HEK293 (cell line): ENCODE measurements at regions of chr16 and their contacts with region 1.

Region 1: DNA sequence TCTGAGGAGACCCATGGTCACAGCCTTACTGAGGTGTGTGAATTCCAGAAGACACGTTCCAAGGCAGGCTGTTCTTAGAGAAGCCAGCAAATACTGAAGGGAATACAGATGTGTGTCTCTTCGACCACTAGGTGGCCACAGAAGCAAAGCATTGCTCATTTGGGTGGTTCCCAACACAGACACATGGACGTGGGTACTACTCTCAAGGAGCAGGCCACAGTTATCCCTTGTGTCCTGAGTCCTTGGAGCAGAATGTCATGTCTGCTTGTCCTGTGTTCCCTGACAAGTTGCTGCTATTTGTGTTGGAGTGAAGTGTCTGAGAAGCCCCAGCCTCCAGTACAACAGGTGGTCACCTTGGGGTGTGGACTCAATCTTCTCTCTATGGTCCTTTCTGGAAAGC is 30.3 kb downstream of the HMOX2 start:
- H3K4me3 ChIP-seq: no peak overlapping the region
- H3K27ac ChIP-seq: no peak overlapping the region
- H3K4me1 ChIP-seq: no peaks in the 10 kb centered on the region
- CTCF ChIP-seq: peak; percentile 83

Region 2: DNA sequence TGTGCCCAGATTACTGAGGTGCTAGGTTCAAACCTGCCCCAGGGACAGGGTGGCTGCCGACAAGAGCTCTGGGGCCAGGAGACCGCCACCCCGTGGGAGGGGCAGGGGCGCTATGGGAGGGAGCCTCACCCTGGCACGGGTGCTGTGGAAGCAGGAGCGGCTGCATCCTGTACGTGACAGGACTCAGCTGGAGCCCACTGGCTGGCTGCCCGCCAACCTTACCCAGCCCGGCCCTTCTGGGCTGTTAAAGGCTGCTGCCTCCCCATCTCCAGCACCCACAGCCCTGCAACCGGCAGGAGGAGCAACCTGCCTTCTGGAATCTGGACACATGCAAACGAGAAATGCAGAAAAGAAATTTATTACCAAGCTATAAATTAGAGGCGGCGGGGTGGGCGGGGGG is 166.5 kb before region 1 on chr16:
- CTCF ChIA-PET with region 1: no interaction called
- POLR2A ChIA-PET with region 1: no interaction called
- H3K4me3 ChIP-seq: no peak overlapping the region
- H3K27ac ChIP-seq: 0 out of 2 replicates have a peak overlapping the region, but pooled peaks have one; percentile 2
- H3K4me1 ChIP-seq: peaks cover 2% of the 10 kb centered on the region; the same call in 1 of the 2 replicates
- CTCF ChIP-seq: peak; percentile 35; the same call in 1 of the 2 replicates

Region 3: GRCh38 chr16:4487955-4488498 is 18.4 kb before region 1 on chr16:
- CTCF ChIA-PET with region 1: interaction called, 10 read pairs
- POLR2A ChIA-PET with region 1: interaction called, 3 read pairs
- H3K4me3 ChIP-seq: no peak overlapping the region
- H3K27ac ChIP-seq: no peak overlapping the region
- H3K4me1 ChIP-seq: 0 out of 2 replicates have a peak, but pooled peaks cover 2% of the 10 kb centered on the region
- CTCF ChIP-seq: no peak

Region 4: DNA sequence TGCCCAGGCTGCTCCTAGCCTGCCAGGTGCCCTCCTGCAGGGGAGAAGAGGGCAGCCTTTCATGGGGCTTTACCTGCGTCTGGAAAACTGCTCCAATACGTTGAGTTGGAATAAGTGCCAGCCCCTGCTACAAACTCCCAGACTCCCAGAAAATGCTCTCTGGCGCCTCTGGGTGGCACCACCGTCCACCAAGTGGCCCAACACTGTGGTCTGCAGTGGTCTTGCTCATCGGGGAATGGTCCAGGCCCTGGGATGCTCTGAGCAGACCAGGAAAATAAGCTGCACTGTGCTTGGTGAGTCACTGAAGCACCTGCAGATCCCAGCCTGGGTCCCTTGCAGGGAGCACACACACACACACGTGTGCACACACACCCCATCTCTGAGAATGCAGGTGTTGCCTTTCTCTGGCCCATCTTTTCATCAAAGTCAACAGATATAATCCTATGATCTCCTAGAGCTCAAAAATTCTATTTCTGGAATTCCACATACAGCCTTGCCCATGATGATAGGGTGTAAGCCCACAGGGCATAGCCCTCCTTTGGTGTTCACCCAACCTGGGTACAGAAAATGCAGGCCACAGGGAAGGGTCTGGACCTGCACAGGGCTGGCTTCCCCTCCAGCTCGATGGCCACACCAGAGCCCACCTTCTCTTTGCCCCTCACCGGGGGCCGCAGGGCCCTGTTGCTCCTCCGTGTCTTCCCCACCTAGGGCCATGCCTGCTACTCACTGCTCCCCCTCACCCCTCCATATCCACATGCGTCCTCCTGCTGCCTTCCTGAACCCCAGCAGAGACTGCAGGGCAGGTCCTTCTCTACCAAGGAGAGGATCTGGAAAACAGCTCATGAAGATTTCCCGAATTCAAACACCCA is 11.6 kb after region 1 on chr16:
- CTCF ChIA-PET with region 1: interaction called, 22 read pairs
- POLR2A ChIA-PET with region 1: no interaction called
- H3K4me3 ChIP-seq: no peak overlapping the region
- H3K27ac ChIP-seq: no peak overlapping the region
- H3K4me1 ChIP-seq: no peaks in the 10 kb centered on the region
- CTCF ChIP-seq: peak; percentile 74

Region 5: GRCh38 chr16:4550591-4550990 is 44.1 kb after region 1 on chr16:
- CTCF ChIA-PET with region 1: interaction called, 13 read pairs
- POLR2A ChIA-PET with region 1: no interaction called
- H3K4me3 ChIP-seq: no peak overlapping the region
- H3K27ac ChIP-seq: no peak overlapping the region
- H3K4me1 ChIP-seq: no peaks in the 10 kb centered on the region
- CTCF ChIP-seq: no peak

Region 6: DNA sequence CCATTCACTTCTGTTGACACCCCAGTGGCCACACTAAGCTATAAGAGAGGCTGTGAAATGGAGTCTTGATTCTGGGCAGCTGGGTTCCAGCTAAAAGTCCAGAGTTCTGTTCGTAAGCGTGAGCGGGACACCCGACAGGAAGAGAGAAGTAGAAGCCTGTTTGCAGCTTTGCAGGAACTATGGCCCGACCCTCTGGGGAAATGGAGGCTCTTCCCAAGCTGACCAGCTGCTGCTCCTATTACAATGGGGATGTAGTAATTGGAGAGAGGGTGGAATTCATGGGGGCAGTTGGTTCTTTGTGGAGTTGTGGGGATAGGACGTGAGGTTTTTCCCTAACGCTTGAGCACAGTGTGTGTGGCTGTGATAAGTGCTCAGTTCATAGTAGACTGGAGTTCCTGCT is 79.8 kb after region 1 on chr16:
- CTCF ChIA-PET with region 1: interaction called, 26 read pairs
- POLR2A ChIA-PET with region 1: no interaction called
- H3K4me3 ChIP-seq: no peak overlapping the region
- H3K27ac ChIP-seq: no peak overlapping the region
- H3K4me1 ChIP-seq: no peaks in the 10 kb centered on the region
- CTCF ChIP-seq: no peak

Region 7: DNA sequence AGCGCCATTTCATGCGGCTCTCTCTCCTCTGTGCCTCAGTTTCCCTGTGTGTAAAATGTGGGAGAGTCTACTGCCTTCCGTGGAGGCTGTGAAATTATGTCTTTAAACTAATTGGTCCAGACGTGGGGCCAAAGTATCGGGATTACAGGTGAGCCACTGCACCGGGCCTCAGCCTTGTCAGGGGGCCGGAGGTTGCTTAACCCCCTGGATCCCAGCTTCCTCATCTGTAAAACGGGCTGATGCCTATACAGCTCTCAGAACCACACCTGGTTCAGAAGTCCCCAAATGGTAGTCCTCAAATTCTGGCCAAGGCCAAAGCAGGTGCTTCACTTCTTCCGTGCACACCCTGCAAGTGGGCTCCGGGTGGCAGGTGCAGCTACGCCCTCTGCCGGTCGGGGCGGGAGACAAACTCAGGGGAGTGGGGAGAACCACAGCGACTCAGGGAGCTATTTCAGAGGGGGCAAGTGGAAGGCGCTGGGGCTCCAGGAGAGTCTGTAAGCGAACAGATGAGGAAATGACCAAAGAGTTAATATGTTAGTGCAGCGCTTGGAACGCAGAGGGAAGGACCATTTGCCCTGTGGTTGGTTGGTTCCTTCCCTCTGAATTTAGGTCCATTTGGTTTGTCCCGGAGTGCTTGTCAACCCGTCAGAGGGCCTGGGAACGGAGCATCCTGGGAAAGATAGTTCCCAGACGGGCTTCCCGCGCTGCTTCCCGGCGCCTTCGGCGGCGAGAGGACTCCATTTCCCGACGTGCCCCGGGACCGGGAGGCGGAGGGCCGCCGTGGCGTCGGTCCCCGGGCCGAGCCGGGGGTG is 117.8 kb after region 1 on chr16 and contains the start of gene MGRN1:
- CTCF ChIA-PET with region 1: interaction called, 11 read pairs
- POLR2A ChIA-PET with region 1: no interaction called
- H3K4me3 ChIP-seq: peak within 1 kb of the TSS; percentile 97
- H3K27ac ChIP-seq: peak within 1 kb of the TSS; percentile 93
- H3K4me1 ChIP-seq: no peaks in the 10 kb centered on the region
- CTCF ChIP-seq: peak; percentile 99

Region 8: DNA sequence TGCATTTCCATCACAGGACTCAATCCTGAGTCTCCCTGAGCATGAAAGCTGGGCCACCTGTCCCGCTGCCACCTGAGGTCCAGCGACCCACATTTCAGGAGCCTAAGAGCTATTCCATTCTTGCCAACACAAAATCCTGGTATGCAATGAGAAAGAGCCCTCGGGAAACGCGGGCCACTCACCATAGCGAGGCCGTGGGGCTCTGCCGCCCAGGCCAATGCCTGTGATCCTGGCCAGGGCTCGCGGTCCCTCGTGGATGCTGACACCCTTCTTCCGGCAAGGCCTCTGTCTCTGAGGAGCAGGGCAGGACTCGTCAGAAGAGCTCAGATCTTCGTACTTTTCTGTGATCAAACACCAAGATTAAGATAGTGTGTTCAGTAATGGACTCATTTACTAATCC is 198.5 kb after region 1 on chr16:
- CTCF ChIA-PET with region 1: no interaction called
- POLR2A ChIA-PET with region 1: no interaction called
- H3K4me3 ChIP-seq: no peak overlapping the region
- H3K27ac ChIP-seq: no peak overlapping the region
- H3K4me1 ChIP-seq: no peaks in the 10 kb centered on the region
- CTCF ChIP-seq: no peak

Region 9: GRCh38 chr16:4957720-4958509 is 451.5 kb after region 1 on chr16 and contains the start of gene SEC14L5:
- CTCF ChIA-PET with region 1: interaction called, 11 read pairs
- POLR2A ChIA-PET with region 1: no interaction called
- H3K4me3 ChIP-seq: peak within 1 kb of the TSS; percentile 28
- H3K27ac ChIP-seq: no peak within 1 kb of the TSS; the same call in 1 of the 2 replicates
- H3K4me1 ChIP-seq: peaks cover 6% of the 10 kb centered on the region; the same call in 1 of the 2 replicates
- CTCF ChIP-seq: no peak